ENCODE measurements at regions of chr4 and their contacts with region 1.

Region 1: GRCh38 chr4:75724066-75724866 is at the start of gene USO1:
- DNase-seq: peak; percentile 100
- H3K4me3 Mint-ChIP-seq: peak within 1 kb of the TSS; percentile 96
- H3K27ac Mint-ChIP-seq: peak within 1 kb of the TSS; percentile 97
- H3K4me1 Mint-ChIP-seq: peaks cover 57% of the 10 kb centered on the region
- H3K27me3 Mint-ChIP-seq: no peaks in the 10 kb centered on the region
- total RNA-seq, gene USO1: 44.5 and 48.6 TPM in 2 replicates

Region 2: DNA sequence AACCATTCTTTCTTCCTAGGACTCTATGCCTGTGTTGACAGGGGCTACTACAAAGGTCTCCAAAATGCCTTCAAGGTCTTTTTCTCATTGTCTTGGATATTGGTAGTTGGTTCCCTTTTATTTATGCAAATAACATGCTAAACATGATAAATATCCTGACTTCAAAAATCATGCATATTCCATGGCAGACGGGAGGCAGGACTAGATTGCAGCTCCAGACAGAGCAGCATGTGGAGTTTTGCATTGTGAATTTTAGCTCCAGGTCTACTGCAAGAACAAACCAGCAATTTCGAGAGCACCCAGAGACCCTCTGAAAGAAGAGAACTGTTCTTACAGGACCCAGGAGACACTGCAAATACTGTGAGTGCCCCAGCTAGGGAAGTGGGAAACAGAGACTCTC is 465.0 kb before region 1 on chr4:
- intact Hi-C with region 1: no loop called
- DNase-seq: no peak
- H3K4me3 Mint-ChIP-seq: no peak overlapping the region
- H3K27ac Mint-ChIP-seq: no peak overlapping the region
- H3K4me1 Mint-ChIP-seq: no peaks in the 10 kb centered on the region
- H3K27me3 Mint-ChIP-seq: no peaks in the 10 kb centered on the region

Region 3: GRCh38 chr4:75630174-75630936 is 93.9 kb before region 1 on chr4 and contains the start of gene CDKL2:
- intact Hi-C with region 1: loop called (anchors 1 kb)
- DNase-seq: peak; percentile 89
- H3K4me3 Mint-ChIP-seq: peak within 1 kb of the TSS; percentile 86
- H3K27ac Mint-ChIP-seq: peak within 1 kb of the TSS; percentile 40
- H3K4me1 Mint-ChIP-seq: peaks cover 20% of the 10 kb centered on the region
- H3K27me3 Mint-ChIP-seq: peaks cover 11% of the 10 kb centered on the region
- total RNA-seq, gene CDKL2: 0.16 and 0.22 TPM in 2 replicates

Region 4: GRCh38 chr4:75698162-75698962 is 25.9 kb before region 1 on chr4:
- intact Hi-C with region 1: loop called (anchors 1 kb)
- DNase-seq: no peak
- H3K4me3 Mint-ChIP-seq: peak overlapping the region; percentile 7
- H3K27ac Mint-ChIP-seq: peak overlapping the region; percentile 86
- H3K4me1 Mint-ChIP-seq: peaks cover 30% of the 10 kb centered on the region
- H3K27me3 Mint-ChIP-seq: no peaks in the 10 kb centered on the region

Region 5: DNA sequence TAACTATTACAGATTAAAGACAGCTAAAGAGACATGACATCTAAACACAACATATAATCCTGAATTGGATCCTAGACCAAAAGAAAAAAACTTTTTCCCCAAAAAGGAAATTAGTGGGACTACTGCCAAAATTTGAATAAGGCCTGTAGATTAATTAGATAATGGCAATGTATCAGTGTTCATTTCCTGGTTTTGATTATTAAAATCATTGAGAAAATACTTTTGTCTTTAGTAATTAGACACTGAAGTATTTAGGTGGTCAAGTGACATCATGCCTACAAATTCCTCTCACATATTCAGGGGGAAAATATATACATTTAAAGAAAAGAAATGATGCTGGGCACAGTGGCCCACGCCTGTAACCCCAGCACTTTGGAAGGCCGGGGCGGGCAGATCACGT is 10.3 kb before region 1 on chr4:
- intact Hi-C with region 1: no loop called
- DNase-seq: no peak
- H3K4me3 Mint-ChIP-seq: no peak overlapping the region
- H3K27ac Mint-ChIP-seq: no peak overlapping the region
- H3K4me1 Mint-ChIP-seq: peaks cover 5% of the 10 kb centered on the region
- H3K27me3 Mint-ChIP-seq: no peaks in the 10 kb centered on the region

Region 6: GRCh38 chr4:75940692-75941253 is 216.5 kb after region 1 on chr4 and contains the start of gene NAAA:
- intact Hi-C with region 1: loop called (anchors 1 kb)
- DNase-seq: peak; percentile 83
- H3K4me3 Mint-ChIP-seq: peak within 1 kb of the TSS; percentile 98
- H3K27ac Mint-ChIP-seq: peak within 1 kb of the TSS; percentile 96
- H3K4me1 Mint-ChIP-seq: peaks cover 32% of the 10 kb centered on the region
- H3K27me3 Mint-ChIP-seq: no peaks in the 10 kb centered on the region
- total RNA-seq, gene NAAA: 31.3 and 31.8 TPM in 2 replicates

Region 7: GRCh38 chr4:76148142-76148865 is 424.0 kb after region 1 on chr4 and contains the start of gene NUP54:
- intact Hi-C with region 1: loop called (anchors 1 kb)
- DNase-seq: peak; percentile 94
- H3K4me3 Mint-ChIP-seq: peak within 1 kb of the TSS; percentile 99
- H3K27ac Mint-ChIP-seq: peak within 1 kb of the TSS; percentile 97
- H3K4me1 Mint-ChIP-seq: peaks cover 35% of the 10 kb centered on the region
- H3K27me3 Mint-ChIP-seq: no peaks in the 10 kb centered on the region
- total RNA-seq, gene NUP54: 70.6 and 75.1 TPM in 2 replicates

Measured in activated T-helper 1 cell treated with anti-CD3 and anti-CD28 coated beads, Interleukin-12 subunit alpha, Interleukin-12 subunit beta, Interleukin-2, Interleukin-4 antibody, amounts not matched to agents 30 ng/mL and 10 ng/mL and 1 ng/mL, durations not matched to agents 14 hours and 24 hours and 36 hours (primary cell).